ENCODE measurements at regions of chr1 and their contacts with region 1.

Region 1: DNA sequence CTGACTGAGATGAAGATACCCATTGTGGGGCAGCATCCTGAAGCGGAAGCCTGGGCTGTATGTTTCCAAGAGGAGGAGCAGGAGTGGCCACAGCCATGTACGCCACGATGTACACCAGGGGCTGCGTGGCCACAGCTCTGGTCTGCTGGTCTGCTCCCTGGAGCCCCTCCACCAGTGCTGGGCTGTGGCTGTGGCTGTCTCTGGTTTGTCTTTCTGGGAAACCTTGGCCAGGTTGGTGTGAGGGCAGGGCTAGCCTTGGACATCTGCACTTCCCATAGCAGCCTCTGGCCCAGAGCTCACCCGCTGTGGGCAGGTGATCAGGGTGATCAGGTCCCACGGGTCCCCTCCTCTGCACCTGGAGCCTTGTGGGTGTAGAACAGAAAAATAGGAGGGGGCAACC is 2.6 kb downstream of the MIB2 start:
- DNase-seq: no peak
- ATAC-seq: no peak
- H3K4me3 ChIP-seq: no peak overlapping the region
- H3K27ac ChIP-seq: no peak overlapping the region
- H3K4me1 ChIP-seq: peaks cover 20% of the 10 kb centered on the region
- H3K27me3 ChIP-seq: no peaks in the 10 kb centered on the region
- CTCF ChIP-seq: no peak

Region 2: GRCh38 chr1:1550591-1551432 is 67.1 kb before region 1 on chr1:
- CTCF ChIA-PET with region 1: no interaction called
- POLR2A ChIA-PET with region 1: no interaction called
- in situ Hi-C with region 1: no loop called
- intact Hi-C with region 1: no loop called
- DNase-seq: no peak
- ATAC-seq: peak; percentile 65
- H3K4me3 ChIP-seq: no peak overlapping the region
- H3K27ac ChIP-seq: no peak overlapping the region
- H3K4me1 ChIP-seq: peaks cover 4% of the 10 kb centered on the region; the same call in 1 of the 2 replicates
- H3K27me3 ChIP-seq: no peaks in the 10 kb centered on the region
- CTCF ChIP-seq: no peak

Region 3: GRCh38 chr1:1680912-1681273 is 63.0 kb after region 1 on chr1:
- CTCF ChIA-PET with region 1: no interaction called
- POLR2A ChIA-PET with region 1: interaction called, 13 read pairs
- in situ Hi-C with region 1: no loop called
- intact Hi-C with region 1: no loop called
- DNase-seq: no peak
- ATAC-seq: no peak; the same call in 1 of the 2 replicates
- H3K4me3 ChIP-seq: no peak overlapping the region
- H3K27ac ChIP-seq: no peak overlapping the region
- H3K4me1 ChIP-seq: peaks cover 25% of the 10 kb centered on the region
- H3K27me3 ChIP-seq: no peaks in the 10 kb centered on the region
- CTCF ChIP-seq: no peak

Region 4: DNA sequence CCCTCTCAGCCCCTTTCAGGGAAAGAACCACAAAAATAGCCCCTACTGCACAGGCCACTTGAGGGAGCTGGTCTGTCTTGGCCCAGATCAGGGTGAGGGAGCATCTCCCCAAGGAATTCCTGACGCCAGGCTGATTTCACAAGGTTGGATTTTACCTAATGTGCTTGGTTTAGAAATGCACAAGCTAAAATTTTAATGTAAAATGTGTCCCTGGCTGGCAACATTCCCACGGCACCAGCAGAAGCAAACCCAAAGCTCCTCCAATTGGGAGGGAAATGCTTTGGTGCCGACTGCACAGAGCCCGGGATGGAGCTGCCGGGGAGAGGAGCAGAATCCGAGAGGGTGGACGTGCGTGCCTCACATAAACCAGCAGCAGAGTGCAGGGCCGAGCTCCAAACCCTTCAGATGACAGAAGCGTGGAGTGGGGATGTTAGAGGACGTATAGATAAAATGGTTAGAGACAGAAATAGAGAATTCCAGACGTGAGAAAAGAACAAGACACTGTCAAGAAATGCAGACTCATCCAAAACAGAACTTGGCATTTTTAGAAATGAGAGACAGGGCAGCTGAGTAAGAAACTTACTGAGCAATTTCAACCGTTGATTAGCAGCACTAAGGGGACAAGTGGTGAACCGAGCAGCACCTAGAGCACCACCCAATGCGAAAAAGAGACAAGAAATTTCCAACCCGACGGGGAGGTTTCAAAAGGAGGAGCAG is 342.7 kb after region 1 on chr1:
- CTCF ChIA-PET with region 1: no interaction called
- POLR2A ChIA-PET with region 1: no interaction called
- in situ Hi-C with region 1: no loop called
- intact Hi-C with region 1: no loop called
- DNase-seq: no peak
- ATAC-seq: no peak
- H3K4me3 ChIP-seq: no peak overlapping the region
- H3K27ac ChIP-seq: no peak overlapping the region
- H3K4me1 ChIP-seq: peaks cover 10% of the 10 kb centered on the region
- H3K27me3 ChIP-seq: no peaks in the 10 kb centered on the region
- CTCF ChIP-seq: no peak